ENCODE measurements at regions of chr6 and their contacts with region 1.

Region 1: DNA sequence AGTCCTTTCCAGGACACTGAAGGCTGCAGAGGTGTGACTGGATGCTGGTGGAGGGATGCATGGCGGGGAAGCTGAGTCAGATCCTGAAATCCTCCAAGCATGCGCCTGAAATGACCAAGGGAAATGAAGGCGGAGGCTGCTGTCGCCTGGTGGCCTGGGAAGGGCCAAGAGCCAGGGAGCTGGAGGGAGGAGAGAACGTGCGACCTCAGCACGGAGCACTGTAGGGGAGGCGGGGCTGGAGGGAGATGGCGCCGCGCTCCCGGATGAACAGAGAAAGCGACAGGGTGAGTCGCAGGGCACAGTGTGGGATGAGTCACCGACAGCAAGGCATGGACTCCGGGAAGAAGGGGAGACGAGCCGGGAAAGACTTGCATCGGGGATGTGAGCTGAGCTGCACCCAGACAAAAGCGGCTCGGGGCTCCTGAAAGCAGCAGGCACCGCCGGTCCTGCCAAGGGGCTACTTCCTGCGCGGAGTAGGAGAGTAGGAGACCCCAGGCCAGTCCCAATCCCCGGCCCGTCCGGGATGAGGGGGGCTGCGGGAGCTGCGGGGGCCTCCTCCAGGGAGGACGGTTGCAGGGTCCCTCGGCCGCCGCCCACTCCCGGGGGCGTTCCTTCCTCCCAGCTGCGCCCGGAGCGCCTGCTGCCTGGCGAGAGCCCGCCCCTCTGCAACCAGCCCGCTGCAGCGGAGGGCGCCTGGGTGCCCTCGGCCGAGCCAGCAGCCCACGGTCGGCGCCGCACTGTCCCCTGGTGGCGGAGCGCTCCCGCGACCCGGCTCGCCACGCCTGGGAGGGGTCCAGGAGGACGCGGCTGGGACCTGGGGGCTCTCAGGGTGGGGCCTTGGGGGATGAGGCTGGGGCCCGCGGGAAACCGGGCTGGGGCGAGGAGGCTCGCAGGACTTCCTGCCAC is 11.0 kb upstream of the NQO2 start:
- DNase-seq: peak; percentile 85 to 88
- ATAC-seq: peak; percentile 73 to 82
- H3K4me3 ChIP-seq: peak overlapping the region; percentile 58 to 84 (median 84)
- H3K27ac ChIP-seq: peak overlapping the region; percentile 80 to 95 (median 94)
- H3K4me1 ChIP-seq: peaks cover 7 to 19% of the 10 kb centered on the region in 2 donors
- H3K27me3 ChIP-seq: no peaks in the 10 kb centered on the region
- CTCF ChIP-seq: peak in 4 of 5 experiments; percentile 86 to 99 (median 94)
- POLR2A ChIP-seq: peak; percentile 46 to 69

Region 2: DNA sequence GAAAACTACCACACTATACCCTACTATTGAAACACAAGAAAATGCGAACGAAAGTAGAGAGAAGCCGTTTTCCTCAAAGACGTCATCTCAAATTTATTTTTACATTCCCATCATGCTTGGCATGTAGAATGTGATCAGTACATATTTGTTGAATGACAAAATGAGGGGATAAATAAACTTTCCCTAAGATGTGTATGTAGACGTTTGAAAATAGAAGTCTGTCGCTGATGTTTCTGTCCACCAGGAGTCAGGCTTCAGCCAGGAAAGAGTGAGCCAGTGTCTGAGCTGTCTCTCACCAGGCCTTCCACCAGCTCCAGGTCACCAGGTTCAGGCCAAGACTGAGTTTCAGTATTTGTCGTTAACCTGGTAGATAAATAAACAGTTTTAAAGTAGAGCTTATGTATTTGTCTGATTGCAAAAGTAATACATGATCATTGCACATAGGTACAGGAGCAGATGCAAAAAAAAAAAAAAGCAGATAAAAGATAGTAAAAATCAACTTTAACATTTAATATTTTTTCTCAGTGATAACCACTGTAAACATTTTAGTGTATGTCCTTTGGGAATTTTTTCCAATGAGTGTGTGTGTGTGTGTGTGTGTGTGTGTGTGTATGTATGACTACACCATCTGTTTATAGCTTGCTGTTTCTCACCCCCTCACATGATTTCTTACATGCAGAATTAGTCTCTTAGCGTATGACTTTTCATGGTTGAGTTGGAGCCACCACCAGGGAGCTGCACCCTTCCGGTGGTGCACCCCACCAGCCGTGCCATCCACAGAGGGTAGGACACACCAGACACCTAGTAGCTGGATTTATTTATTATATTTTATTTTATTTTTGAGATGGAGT is 197.3 kb before region 1 on chr6:
- in situ Hi-C with region 1: no loop called
- intact Hi-C with region 1: loop called (anchors 5 kb)
- DNase-seq: peak; percentile 61 to 78
- ATAC-seq: peak; percentile 84 to 85
- H3K4me3 ChIP-seq: peak overlapping the region in 3 of 4 donors; percentile 24 to 29 (median 27)
- H3K27ac ChIP-seq: peak overlapping the region; percentile 78 to 80 (median 79)
- H3K4me1 ChIP-seq: peaks cover 23 to 31% of the 10 kb centered on the region in 2 donors
- H3K27me3 ChIP-seq: no peaks in the 10 kb centered on the region
- CTCF ChIP-seq: peak; percentile 74 to 84 (median 78)
- POLR2A ChIP-seq: no peak

Region 3: DNA sequence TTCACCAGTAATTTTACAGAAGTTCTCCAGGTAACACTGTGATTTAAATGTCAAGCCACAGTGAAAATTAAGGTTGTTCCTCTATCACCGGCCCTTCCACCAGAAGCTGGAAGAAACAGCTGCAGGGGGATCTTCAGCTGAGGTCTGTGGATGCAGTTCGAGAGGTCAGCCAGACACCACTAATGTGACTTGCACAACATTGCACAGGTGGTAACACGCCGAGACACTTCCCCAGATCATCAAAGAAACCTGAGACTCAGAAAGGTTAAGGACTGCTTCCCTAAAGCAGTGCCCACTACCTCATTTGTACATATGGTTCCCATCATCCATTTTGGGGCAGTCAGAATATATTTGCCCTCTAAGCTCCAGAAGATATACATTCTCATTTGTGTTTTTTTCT is 77.5 kb before region 1 on chr6:
- in situ Hi-C with region 1: no loop called
- intact Hi-C with region 1: no loop called
- DNase-seq: no peak
- ATAC-seq: no peak
- H3K4me3 ChIP-seq: no peak overlapping the region
- H3K27ac ChIP-seq: no peak overlapping the region
- H3K4me1 ChIP-seq: no peaks in the 10 kb centered on the region
- H3K27me3 ChIP-seq: no peaks in the 10 kb centered on the region
- CTCF ChIP-seq: no peak
- POLR2A ChIP-seq: no peak

Region 4: GRCh38 chr6:2952557-2953095 is 36.1 kb before region 1 on chr6:
- in situ Hi-C with region 1: loop called in 2 of 4 experiments (anchors 5 kb)
- intact Hi-C with region 1: loop called (anchors 1 kb)
- DNase-seq: peak; percentile 49 to 76
- ATAC-seq: peak; percentile 59 to 76
- H3K4me3 ChIP-seq: no peak overlapping the region
- H3K27ac ChIP-seq: peak overlapping the region; percentile 45 to 74 (median 65)
- H3K4me1 ChIP-seq: peaks cover 11 to 32% of the 10 kb centered on the region in 2 donors
- H3K27me3 ChIP-seq: no peaks in the 10 kb centered on the region
- CTCF ChIP-seq: peak; percentile 93 to 97 (median 94)
- POLR2A ChIP-seq: no peak

Region 5: GRCh38 chr6:3052481-3053230 is 64.0 kb after region 1 on chr6:
- in situ Hi-C with region 1: loop called in 3 of 4 experiments (anchors 5 kb)
- intact Hi-C with region 1: no loop called
- DNase-seq: no peak
- ATAC-seq: no peak
- H3K4me3 ChIP-seq: no peak overlapping the region
- H3K27ac ChIP-seq: no peak overlapping the region
- H3K4me1 ChIP-seq: peaks cover 4 to 14% of the 10 kb centered on the region in 2 donors
- H3K27me3 ChIP-seq: no peaks in the 10 kb centered on the region
- CTCF ChIP-seq: no peak
- POLR2A ChIP-seq: no peak

Measured in gastrocnemius medialis (tissue), 4 donors.